ENCODE measurements at regions of chr10 and their contacts with region 1.

Region 1: DNA sequence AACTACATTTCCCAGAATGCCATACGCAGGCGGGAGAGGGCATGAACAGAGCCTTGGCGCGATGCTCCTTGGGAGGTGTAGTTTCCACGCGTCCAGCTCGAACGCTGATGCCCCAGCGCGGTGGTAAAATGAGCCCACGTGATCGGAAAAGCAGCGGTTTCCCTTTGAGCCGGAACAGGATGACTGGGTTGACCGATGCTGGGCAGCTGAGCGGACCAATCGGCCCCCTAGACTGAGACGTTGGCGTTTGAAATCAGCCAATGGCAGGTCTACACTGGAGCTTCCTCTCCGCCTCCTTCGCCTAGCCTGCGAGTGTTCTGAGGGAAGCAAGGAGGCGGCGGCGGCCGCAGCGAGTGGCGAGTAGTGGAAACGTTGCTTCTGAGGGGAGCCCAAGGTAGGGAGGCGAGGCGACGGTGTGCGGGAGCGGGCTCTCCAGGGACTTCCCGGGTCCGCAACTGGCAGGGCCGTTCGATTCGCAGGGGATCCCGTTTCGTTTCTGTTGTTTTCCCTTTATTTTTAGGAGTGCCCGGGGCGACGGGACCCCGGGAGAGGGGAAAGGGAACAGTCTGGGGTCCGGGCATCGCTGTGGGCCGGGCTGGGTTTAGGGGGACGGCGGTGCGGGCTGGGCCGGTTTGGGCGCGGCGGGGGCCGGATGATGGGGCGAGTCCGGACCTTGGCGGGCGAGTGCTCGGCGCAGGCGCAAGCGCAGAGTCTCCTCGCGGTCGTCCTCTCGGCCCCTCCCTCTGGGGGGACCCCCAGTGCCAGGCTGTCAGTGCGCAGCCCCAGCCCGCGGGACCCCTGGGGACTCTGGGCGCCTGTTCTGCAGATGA is at the start of gene BUB3:
- DNase-seq: peak; percentile 88
- ATAC-seq: peak; percentile 93
- H3K4me3 Mint-ChIP-seq: peak within 1 kb of the TSS; percentile 100
- H3K27ac Mint-ChIP-seq: peak within 1 kb of the TSS; percentile 99
- H3K4me1 Mint-ChIP-seq: peaks cover 55% of the 10 kb centered on the region
- H3K27me3 Mint-ChIP-seq: peaks cover 12% of the 10 kb centered on the region
- total RNA-seq, gene BUB3: 254 to 265 TPM

Region 2: DNA sequence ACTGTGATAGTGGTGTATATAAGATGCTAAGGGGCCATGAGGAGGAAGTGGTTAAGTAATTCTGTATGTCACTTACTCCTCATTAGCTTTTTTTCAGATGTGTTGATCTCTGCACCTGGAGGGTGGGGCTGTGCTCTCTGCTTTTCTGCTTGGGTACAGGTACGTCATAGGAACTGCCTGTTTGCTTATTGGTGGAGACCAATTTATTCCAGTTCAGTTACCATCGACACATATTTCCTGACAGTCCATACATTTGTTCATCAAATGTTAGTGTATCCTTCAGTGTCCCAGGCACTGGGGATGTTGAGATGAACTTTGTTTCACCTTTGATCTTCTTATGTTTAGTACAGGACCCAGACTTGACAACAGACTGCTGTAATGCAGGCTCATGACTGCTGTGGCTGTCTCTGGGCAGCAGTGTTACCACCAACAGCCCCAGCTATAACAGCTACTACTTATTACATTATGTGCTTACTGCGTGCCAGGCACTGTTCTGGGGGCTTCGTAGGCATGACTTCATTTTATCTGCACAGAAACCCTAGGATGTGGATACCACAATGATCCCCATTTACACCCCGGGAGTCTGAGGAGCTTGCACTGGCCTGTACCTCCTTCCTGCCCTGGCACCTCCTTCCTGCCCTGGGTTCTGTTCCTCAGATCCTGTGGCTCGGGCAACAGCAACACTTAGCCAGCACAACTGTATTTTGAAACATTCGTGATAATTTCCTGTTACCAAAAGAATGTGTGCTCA is 87.3 kb after region 1 on chr10:
- POLR2A ChIA-PET with region 1: interaction called, 19 read pairs
- DNase-seq: peak; percentile 43
- ATAC-seq: peak; percentile 81
- H3K4me3 Mint-ChIP-seq: peak overlapping the region; percentile 54
- H3K27ac Mint-ChIP-seq: peak overlapping the region; percentile 97
- H3K4me1 Mint-ChIP-seq: peaks cover 31% of the 10 kb centered on the region
- H3K27me3 Mint-ChIP-seq: no peaks in the 10 kb centered on the region